Breast epithelium (tissue), 4 donors: ENCODE measurements at regions of chr18 and their contacts with region 1.

Region 1: GRCh38 chr18:36284671-36285295 is 12.7 kb upstream of the FHOD3 start:
- DNase-seq: no peak
- H3K4me3 ChIP-seq: no peak overlapping the region
- H3K27ac ChIP-seq: no peak overlapping the region
- H3K4me1 ChIP-seq: no peaks in the 10 kb centered on the region
- H3K27me3 ChIP-seq: no peaks in the 10 kb centered on the region
- CTCF ChIP-seq: peak; percentile 84 to 92 (median 89)
- POLR2A ChIP-seq: no peak

Region 2: GRCh38 chr18:36015629-36016028 is 269.2 kb before region 1 on chr18:
- intact Hi-C with region 1: loop called (anchors 10 kb)
- DNase-seq: no peak
- H3K4me3 ChIP-seq: no peak overlapping the region
- H3K27ac ChIP-seq: no peak overlapping the region
- H3K4me1 ChIP-seq: no peaks in the 10 kb centered on the region
- H3K27me3 ChIP-seq: no peaks in the 10 kb centered on the region
- CTCF ChIP-seq: no peak
- POLR2A ChIP-seq: no peak

Region 3: DNA sequence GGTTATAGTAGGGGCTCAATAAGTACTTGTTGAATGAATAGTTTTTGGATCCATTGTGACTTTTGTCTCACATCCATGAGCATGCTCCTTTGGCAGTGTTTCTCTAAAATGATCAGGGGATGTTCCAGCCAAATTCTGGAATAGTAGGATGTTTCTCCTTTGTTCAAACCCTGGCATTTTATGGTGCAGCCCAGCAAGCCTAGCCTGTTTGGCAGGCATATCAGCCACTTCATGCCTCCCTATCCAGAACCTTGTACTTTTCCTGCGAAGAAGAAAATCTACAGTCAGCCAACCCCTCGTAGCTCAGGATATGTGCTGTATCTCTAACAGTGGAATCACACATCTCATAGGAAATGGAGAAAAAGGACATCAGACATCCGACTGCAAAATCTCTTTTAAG is 190.4 kb before region 1 on chr18:
- intact Hi-C with region 1: loop called (anchors 5 kb)
- DNase-seq: no peak
- H3K4me3 ChIP-seq: no peak overlapping the region
- H3K27ac ChIP-seq: no peak overlapping the region
- H3K4me1 ChIP-seq: no peaks in the 10 kb centered on the region
- H3K27me3 ChIP-seq: no peaks in the 10 kb centered on the region
- CTCF ChIP-seq: no peak
- POLR2A ChIP-seq: no peak

Region 4: GRCh38 chr18:36274083-36274715 is 10.6 kb before region 1 on chr18:
- intact Hi-C with region 1: no loop called
- DNase-seq: no peak
- H3K4me3 ChIP-seq: no peak overlapping the region
- H3K27ac ChIP-seq: no peak overlapping the region
- H3K4me1 ChIP-seq: no peaks in the 10 kb centered on the region
- H3K27me3 ChIP-seq: peaks cover 0 to 4% of the 10 kb centered on the region in 2 donors
- CTCF ChIP-seq: no peak
- POLR2A ChIP-seq: no peak

Region 5: GRCh38 chr18:37762076-37762621 is 1477.4 kb after region 1 on chr18:
- intact Hi-C with region 1: no loop called
- DNase-seq: no peak
- H3K4me3 ChIP-seq: no peak overlapping the region
- H3K27ac ChIP-seq: no peak overlapping the region
- H3K4me1 ChIP-seq: no peaks in the 10 kb centered on the region
- H3K27me3 ChIP-seq: no peaks in the 10 kb centered on the region
- CTCF ChIP-seq: no peak
- POLR2A ChIP-seq: no peak